Spleen (tissue), 13 donors: ENCODE measurements at regions of chr9 and their contacts with region 1.

Region 1: DNA sequence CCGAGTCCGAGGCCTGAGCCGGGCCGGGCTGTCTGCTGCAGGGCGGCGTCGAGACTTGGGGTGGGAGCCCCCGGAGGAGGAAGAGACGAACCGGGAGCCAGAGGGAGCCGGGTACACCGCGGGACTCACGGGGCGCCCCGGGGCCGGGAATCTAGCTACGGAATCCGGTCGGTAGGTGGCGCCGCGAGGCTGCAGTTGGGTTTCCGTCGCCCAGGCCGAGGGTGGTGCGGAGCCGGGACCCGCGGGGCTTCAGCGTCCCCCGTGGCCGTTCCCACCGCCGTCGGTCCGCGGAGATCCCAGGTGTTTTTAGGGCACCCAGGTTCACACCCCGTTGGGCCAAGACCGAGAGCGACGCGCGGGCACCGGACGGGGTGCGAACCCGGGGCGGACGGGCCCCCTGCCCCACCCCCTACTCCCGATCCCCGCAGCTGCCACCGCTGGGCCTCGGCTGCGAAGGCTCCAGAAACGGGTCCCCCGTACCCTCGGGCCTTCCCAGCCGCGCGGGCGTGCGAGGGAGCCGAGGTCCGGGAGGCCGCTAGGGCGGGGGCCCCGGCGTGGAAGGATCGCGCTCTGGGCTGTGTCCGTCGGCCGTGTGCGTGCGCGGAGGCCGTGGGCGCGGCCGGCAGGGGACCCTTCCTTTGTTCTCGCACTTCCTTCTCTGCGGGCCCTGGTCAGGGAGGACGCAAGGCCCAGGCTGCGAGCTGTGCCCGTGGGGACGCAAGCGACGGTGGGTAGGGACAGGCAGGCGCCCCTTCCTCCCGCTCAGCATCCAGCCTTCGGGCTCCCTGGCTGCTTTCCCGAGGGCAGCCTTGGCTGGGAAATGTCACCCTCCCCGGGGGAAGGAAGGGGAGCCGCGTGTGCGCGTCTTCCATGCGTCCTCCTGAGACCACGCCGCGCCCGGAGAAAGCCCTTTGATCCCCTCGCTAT is 146.6 kb downstream of the GAPVD1 start:
- DNase-seq: peak; percentile 94
- H3K4me3 ChIP-seq: peak overlapping the region; percentile 51 to 84 (median 58)
- H3K27ac ChIP-seq: peak overlapping the region in 7 of 8 donors; percentile 12 to 72 (median 62)
- H3K4me1 ChIP-seq: peaks cover 8 to 22% (median 17%) of the 10 kb centered on the region in 6 donors
- H3K27me3 ChIP-seq: peaks cover 0 to 42% (median 11%) of the 10 kb centered on the region in 7 donors
- CTCF ChIP-seq: peak in 10 of 11 experiments; percentile 55 to 96 (median 83)
- POLR2A ChIP-seq: no peak

Region 2: DNA sequence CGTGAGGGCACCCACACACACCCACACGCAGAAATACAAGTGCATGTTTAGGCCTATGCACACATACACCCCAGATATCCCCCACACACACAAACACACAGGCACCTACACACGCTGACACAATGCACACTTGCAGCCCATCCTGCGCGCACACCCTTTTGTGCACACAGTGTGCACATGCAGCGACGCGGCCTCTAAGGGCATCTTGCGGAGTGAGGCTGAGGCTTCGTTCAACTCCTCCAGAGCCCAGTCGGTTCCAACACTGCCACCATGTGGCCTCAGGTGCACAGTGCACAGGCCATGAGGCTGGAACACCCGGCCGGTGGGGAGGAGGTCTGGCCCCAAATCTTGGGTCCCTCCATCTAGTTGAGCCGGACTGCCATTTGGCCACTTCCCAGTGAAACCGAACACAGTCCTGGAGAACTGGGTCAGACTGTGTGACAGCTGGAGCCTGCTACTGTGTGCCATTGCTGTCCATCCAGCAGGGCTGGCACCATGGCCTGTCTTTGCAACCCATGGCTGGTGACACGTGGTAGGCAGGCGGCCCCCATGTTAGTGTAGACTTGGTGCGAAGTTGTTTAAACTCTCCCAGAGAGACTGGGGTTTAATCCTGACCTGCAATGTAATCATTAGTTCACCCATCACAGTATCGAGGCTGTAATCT is 820.7 kb after region 1 on chr9:
- intact Hi-C with region 1: loop called (anchors 5 kb)
- DNase-seq: peak; percentile 91
- H3K4me3 ChIP-seq: no peak overlapping the region
- H3K27ac ChIP-seq: no peak overlapping the region
- H3K4me1 ChIP-seq: peaks cover 0 to 7% (median 4%) of the 10 kb centered on the region in 6 donors
- H3K27me3 ChIP-seq: peaks cover 0 to 54% (median 0%) of the 10 kb centered on the region in 7 donors
- CTCF ChIP-seq: peak; percentile 84 to 97 (median 91)
- POLR2A ChIP-seq: no peak

Region 3: GRCh38 chr9:126411225-126411947 is 1003.1 kb after region 1 on chr9:
- intact Hi-C with region 1: loop called (anchors 10 kb)
- DNase-seq: peak; percentile 41
- H3K4me3 ChIP-seq: peak overlapping the region in 2 of 8 donors; percentile 0 to 47
- H3K27ac ChIP-seq: peak overlapping the region; percentile 24 to 79 (median 67)
- H3K4me1 ChIP-seq: peaks cover 10 to 52% (median 25%) of the 10 kb centered on the region in 6 donors
- H3K27me3 ChIP-seq: no peaks in the 10 kb centered on the region
- CTCF ChIP-seq: no peak
- POLR2A ChIP-seq: no peak